ENCODE measurements at regions of chr20 and their contacts with region 1.

Region 1: DNA sequence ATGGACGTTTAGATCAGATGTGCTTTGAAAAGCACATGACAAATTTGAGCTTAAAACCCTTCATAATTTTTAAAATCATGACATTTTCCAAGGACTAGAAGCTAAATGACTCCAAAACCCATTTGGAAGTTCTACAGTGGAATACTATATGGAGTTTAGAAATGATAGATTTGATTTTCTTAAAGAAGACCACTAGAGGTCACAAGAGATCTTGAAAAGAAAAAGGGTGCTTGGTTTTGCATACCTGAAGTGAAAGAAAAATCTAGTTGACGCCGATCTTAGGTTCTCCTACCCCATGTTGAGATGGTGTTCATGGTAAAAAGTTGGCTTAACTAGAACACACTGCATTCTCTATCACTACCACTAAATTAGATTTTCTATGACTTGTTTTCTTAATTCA is 31.5 kb downstream of the CFAP61 start:
- DNase-seq: no peak

Region 2: DNA sequence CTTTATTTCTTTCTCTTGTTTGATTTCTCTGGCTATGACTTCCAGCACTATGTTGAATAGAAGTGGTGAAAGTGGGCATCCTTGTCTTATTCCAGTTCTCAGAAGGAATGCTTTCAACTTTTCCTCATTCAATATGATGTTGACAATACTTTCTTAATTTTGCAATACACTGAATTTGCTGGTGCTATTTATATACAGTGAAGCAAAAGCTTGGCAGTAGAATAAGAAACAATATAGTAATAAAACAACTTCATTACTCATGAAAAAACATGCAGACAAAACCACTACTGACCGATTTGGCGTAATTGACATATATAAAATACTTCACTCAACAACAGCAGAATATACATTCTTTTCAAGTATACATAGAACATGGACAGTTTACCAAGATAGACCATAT is 65.0 kb after region 1 on chr20:
- intact Hi-C with region 1: loop called in 1 of 2 experiments (anchors 10 kb)
- DNase-seq: no peak